ENCODE measurements at regions of chr3 and their contacts with region 1.

Region 1: DNA sequence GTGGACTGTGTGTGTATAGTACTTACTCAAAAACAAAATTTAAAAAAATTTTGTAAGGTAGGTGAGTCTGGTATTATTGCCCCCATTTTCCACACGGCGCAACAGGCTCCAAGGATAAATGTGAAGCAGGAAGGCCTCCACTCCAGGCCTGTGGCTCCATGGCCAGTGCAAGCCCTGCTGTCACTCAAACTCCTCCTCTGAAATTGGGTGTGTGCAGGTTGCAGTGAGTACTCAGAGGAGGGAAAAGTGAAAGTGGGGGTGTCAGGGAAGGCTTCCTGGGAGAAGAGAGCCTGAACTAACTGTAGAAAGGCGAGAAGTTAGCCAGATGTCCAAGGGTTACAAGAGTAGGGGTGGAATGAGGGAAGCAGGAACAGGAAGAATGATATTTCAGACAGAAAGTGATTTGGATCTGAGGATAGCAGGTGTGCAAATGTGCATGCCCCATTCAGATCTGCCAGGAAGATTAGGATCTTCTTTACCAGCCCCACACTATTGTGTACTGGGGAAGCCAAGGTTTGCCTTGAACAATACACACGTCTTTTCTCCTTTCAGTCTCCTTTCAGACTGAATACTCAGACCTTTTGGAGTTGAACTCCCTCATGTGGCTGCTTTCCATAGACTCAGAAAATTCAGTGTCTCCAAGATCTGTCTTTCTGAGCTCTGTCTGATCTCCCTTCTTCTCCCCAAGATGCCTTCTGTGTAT is 48.7 kb upstream of the RYK start:
- DNase-seq: no peak
- H3K4me3 ChIP-seq: no peak overlapping the region
- CTCF ChIP-seq: peak; percentile 47

Region 2: DNA sequence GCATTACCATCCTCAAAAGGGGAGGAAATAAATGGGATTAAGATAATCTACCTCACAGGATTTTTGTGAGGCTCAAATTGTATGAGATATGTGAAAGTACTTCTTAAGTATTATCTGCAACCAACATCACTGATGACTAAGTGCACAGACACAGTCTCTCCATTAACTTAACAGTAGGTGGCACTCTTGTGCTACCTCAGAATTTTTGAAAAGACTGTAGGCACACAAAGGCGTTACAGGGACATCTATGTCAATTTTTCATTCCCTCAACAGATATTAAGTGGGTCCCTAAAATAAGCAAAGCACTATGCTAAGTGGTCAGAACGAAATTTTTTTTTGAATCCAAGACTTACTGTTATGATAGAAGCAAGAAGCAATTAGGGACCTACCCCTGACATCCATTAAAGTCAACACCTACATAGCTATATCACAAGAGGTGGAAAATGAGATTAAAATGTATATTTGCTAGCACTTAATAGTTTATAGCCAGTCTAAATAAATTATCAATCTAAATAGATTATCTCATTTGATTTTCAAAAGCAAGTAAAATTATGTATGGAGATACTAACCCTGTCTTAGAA is 101.6 kb before region 1 on chr3:
- CTCF ChIA-PET with region 1: interaction called, 76 read pairs
- POLR2A ChIA-PET with region 1: no interaction called
- DNase-seq: peak; percentile 24
- H3K4me3 ChIP-seq: no peak overlapping the region
- CTCF ChIP-seq: peak; percentile 65

Region 3: GRCh38 chr3:134253475-134254226 is 45.7 kb before region 1 on chr3:
- CTCF ChIA-PET with region 1: no interaction called
- POLR2A ChIA-PET with region 1: no interaction called
- DNase-seq: no peak
- H3K4me3 ChIP-seq: no peak overlapping the region
- CTCF ChIP-seq: no peak

Region 4: GRCh38 chr3:134277066-134277660 is 22.2 kb before region 1 on chr3:
- CTCF ChIA-PET with region 1: no interaction called
- POLR2A ChIA-PET with region 1: no interaction called
- DNase-seq: no peak
- H3K4me3 ChIP-seq: no peak overlapping the region
- CTCF ChIP-seq: no peak

Region 5: GRCh38 chr3:134333522-134334181 is 34.3 kb after region 1 on chr3:
- CTCF ChIA-PET with region 1: no interaction called
- POLR2A ChIA-PET with region 1: no interaction called
- DNase-seq: peak; percentile 88
- H3K4me3 ChIP-seq: no peak overlapping the region
- CTCF ChIP-seq: peak; percentile 41